Head of caudate nucleus (tissue), 42 donors: ENCODE measurements at regions of chr13 and their contacts with region 1.

Region 1: GRCh38 chr13:75372517-75372916 is 109.5 kb downstream of the TBC1D4 start:
- DNase-seq: peak in 6 of 42 donors; percentile 12 to 50 (median 25)

Region 2: GRCh38 chr13:75416327-75417005 is 43.9 kb after region 1 on chr13:
- intact Hi-C with region 1: no loop called
- DNase-seq: no peak

Region 3: DNA sequence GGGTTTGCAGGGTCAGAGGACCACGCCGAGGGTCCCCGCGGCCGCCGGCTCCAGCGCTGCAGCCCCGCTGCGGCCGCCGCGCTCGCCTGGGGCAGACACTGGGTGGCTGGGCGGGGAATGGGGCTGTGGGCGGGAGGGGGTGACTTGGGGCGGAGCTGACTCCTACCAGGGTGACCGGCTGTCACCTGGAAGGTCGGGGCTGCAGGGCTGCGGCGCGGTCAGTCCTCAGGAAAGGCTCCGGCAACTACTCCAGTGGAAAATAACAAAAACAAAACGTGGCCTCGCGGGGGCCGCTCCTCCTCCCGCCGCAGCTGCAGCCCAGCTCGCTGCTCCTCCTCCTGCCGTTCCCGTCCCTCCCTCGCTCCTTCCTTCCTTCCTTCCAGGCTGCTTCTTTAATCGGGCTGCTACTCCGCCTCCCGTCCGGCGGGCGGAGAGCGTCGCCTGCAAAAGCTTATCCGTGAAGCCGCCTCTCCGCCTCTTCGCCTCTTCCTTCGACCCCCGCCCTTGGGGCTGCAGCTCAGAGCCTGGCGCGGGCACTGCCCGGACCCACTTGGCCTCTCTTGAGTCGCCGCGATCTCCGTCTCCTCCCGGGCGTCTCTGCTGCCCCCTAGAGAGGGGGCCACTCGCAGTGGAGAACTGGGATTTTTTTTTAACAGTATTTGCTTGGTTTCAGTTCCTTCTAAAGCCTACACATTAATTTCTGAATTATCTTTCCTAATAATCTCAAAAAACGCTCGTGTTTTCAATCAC is 109.7 kb after region 1 on chr13 and contains the start of gene TBC1D4:
- intact Hi-C with region 1: loop called (anchors 10 kb)
- DNase-seq: peak; percentile 49 to 91 (median 84)

Region 4: DNA sequence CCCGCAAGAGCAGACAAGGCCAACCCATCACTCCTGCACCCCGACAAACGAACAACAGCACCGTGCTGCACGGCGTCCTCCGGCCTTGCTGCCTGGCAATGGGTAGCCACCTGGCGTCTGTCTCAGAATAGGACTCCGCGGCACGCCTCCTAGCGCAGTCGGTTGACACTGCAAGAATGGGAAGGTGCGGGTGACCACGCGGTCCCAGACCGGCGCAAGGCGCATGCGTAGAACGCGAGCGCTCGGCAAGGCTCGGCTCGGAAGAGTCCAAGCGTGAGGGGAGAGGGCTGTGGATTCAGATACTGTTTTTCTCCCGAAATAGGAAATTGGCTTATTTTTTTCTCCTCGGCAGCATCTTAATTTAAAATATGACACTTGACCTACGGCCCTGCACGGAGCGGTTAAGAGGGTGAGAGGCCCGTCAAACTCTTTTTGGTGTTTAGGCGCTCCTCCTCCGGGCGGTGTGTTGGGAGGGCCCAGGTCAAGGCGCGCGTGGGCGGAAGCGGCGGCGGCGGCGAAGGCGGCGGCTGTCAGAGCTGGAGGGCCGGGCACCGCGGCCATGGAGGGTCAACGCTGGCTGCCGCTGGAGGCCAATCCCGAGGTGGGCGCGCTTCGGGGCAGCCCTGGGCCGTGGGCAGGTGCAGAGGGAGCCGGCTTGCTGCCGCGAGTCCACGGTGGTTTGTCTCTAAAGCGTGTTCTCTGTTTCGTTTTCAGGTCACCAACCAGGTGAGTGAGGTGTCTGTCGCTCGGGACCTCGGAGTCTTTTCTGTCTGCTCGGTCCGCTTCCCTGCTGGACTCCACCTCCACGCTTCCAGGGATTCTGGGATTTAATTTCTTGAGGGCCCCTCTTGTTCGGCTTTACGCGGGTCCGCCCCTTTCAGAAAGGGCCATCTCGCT is 177.0 kb after region 1 on chr13 and contains the start of gene UCHL3:
- intact Hi-C with region 1: loop called (anchors 5 kb)
- DNase-seq: peak; percentile 91 to 98 (median 96)